A549 (cell line): ENCODE measurements at regions of chr10 and their contacts with region 1.

Region 1: DNA sequence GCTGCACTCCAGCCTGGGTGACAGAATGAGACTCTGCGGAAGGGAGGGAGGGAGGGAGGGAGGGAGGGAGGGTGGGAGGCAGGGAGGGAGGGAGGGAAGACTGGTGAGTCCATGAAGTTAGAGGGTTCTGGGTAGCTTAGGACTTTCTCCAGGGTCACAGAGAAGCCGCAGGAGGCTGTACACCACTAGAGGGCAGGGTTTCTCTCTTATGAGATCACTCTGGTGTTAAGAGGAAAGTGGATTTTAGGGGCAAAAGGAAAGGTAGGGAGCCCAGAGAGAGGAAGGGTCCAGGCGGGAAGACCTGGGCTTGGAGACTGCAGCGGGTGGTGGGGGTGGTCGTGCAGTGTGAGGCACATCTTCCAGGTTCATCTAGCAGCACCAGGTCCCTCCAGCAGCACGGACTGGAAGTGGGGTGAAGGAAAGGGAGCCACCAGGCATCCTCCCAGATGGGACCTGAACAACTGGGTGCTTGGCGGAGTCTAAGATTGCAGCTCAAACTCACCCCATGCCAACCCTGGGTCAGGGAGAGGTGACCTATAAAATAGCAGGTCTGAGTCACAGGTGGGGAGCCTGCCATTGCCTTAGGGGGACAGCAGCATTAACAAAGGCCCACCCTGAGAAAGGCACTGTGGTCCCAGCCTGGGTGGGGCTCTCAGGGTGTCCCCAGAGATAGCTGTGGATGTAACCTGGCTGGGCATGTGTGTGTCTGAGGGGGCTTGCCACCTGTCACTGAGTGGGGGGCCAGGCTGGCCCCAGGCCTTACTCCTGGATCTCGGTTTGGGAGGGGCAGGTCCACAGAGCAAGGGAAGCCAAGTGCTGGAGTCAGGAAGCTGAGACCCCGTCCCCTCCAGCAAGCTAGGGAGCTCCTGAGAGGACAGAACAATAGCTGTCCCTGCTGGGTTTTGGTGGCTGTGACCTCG is 48.5 kb upstream of the SLC29A3 start:
- DNase-seq: peak; percentile 72 to 91
- ATAC-seq: peak; percentile 80 to 90
- H3K4me3 ChIP-seq: no peak overlapping the region
- H3K27ac ChIP-seq: no peak overlapping the region
- H3K4me1 ChIP-seq: peaks cover 17% of the 10 kb centered on the region; the same call in 2 of the 3 replicates
- CTCF ChIP-seq: peak; percentile 62
- EP300 ChIP-seq: no peak
- POLR2A ChIP-seq: no peak
- RAD21 ChIP-seq: peak; percentile 32 to 45; a peak in 4 of 5 replicates

Region 2: DNA sequence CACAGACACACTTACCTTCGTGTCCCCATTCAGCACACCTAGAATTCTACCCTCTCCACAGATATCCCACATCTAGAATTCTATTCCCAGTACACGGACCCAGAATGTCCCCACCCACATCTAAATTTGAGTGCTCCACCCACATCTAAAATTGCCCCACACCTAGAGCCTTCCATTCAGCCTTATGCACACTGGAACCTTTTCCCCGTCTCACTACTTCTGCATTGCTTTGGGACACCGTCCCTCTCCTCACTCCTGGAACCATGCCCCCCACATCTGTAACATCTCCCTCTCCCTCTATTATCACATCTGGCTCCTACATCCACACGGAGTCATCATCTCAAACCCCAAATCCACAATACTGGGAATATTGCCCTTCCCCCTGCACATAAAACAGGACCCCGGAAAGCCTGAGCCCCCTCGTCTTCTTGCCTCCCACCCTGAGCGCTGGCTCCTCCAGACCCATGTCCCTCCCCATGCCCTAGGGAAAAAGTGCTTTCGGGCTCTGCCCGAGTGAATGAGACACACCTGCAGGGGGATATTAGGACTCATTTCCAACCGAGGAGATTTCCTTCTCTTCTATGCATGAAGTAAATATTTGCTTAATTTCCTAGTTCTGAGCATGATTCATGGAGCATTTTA is 184.0 kb before region 1 on chr10:
- CTCF ChIA-PET with region 1: no interaction called
- POLR2A ChIA-PET with region 1: no interaction called
- DNase-seq: no peak
- ATAC-seq: no peak
- H3K4me3 ChIP-seq: no peak overlapping the region
- H3K27ac ChIP-seq: no peak overlapping the region
- H3K4me1 ChIP-seq: no peaks in the 10 kb centered on the region
- CTCF ChIP-seq: no peak
- EP300 ChIP-seq: no peak
- POLR2A ChIP-seq: no peak
- RAD21 ChIP-seq: no peak

Region 3: GRCh38 chr10:71255808-71256660 is 14.5 kb before region 1 on chr10:
- CTCF ChIA-PET with region 1: interaction called, 15 read pairs
- POLR2A ChIA-PET with region 1: no interaction called
- DNase-seq: no peak
- ATAC-seq: no peak; a peak in 1 of 6 replicates
- H3K4me3 ChIP-seq: no peak overlapping the region
- H3K27ac ChIP-seq: no peak overlapping the region
- H3K4me1 ChIP-seq: no peaks in the 10 kb centered on the region
- CTCF ChIP-seq: no peak
- EP300 ChIP-seq: no peak
- POLR2A ChIP-seq: no peak
- RAD21 ChIP-seq: no peak